ENCODE measurements at regions of chr10 and their contacts with region 1.

Region 1: GRCh38 chr10:100934084-100934659 is 21.4 kb downstream of the SLF2 start:
- DNase-seq: no peak
- ATAC-seq: peak; percentile 75
- H3K4me3 ChIP-seq: no peak overlapping the region
- H3K27ac ChIP-seq: no peak overlapping the region
- H3K4me1 ChIP-seq: no peaks in the 10 kb centered on the region
- H3K27me3 ChIP-seq: no peaks in the 10 kb centered on the region
- CTCF ChIP-seq: peak; percentile 50 to 89 (median 83)
- POLR2A ChIP-seq: no peak
- RAD21 ChIP-seq: peak; percentile 41

Region 2: GRCh38 chr10:100894589-100895294 is 39.4 kb before region 1 on chr10:
- CTCF ChIA-PET with region 1: no interaction called
- POLR2A ChIA-PET with region 1: no interaction called
- RAD21 ChIA-PET with region 1: no interaction called
- intact Hi-C with region 1: no loop called
- DNase-seq: no peak
- ATAC-seq: no peak
- H3K4me3 ChIP-seq: 0 out of 4 replicates have a peak overlapping the region, but pooled peaks of 1 of the 2 experiments have one; percentile 22
- H3K27ac ChIP-seq: peak overlapping the region; percentile 1; the same call in 1 of the 2 replicates
- H3K4me1 ChIP-seq: peaks cover 29 to 46% of the 10 kb centered on the region in 2 experiments
- H3K27me3 ChIP-seq: no peaks in the 10 kb centered on the region
- CTCF ChIP-seq: no peak
- POLR2A ChIP-seq: no peak
- RAD21 ChIP-seq: no peak

Region 3: GRCh38 chr10:100945754-100946153 is 11.6 kb after region 1 on chr10:
- CTCF ChIA-PET with region 1: interaction called, 15 read pairs
- POLR2A ChIA-PET with region 1: no interaction called
- RAD21 ChIA-PET with region 1: no interaction called
- intact Hi-C with region 1: no loop called
- DNase-seq: no peak
- ATAC-seq: no peak
- H3K4me3 ChIP-seq: no peak overlapping the region
- H3K27ac ChIP-seq: no peak overlapping the region
- H3K4me1 ChIP-seq: no peaks in the 10 kb centered on the region
- H3K27me3 ChIP-seq: no peaks in the 10 kb centered on the region
- CTCF ChIP-seq: no peak
- POLR2A ChIP-seq: no peak
- RAD21 ChIP-seq: no peak

Measured in HCT116 (cell line).